ENCODE measurements at regions of chr9 and their contacts with region 1.

Region 1: GRCh38 chr9:128296337-128297220 is 20.5 kb downstream of the SWI5 start:
- DNase-seq: no peak
- ATAC-seq: no peak
- H3K4me3 ChIP-seq: no peak overlapping the region
- H3K27ac ChIP-seq: no peak overlapping the region
- H3K4me1 ChIP-seq: peaks cover 6% of the 10 kb centered on the region
- H3K27me3 ChIP-seq: no peaks in the 10 kb centered on the region
- CTCF ChIP-seq: no peak

Region 2: DNA sequence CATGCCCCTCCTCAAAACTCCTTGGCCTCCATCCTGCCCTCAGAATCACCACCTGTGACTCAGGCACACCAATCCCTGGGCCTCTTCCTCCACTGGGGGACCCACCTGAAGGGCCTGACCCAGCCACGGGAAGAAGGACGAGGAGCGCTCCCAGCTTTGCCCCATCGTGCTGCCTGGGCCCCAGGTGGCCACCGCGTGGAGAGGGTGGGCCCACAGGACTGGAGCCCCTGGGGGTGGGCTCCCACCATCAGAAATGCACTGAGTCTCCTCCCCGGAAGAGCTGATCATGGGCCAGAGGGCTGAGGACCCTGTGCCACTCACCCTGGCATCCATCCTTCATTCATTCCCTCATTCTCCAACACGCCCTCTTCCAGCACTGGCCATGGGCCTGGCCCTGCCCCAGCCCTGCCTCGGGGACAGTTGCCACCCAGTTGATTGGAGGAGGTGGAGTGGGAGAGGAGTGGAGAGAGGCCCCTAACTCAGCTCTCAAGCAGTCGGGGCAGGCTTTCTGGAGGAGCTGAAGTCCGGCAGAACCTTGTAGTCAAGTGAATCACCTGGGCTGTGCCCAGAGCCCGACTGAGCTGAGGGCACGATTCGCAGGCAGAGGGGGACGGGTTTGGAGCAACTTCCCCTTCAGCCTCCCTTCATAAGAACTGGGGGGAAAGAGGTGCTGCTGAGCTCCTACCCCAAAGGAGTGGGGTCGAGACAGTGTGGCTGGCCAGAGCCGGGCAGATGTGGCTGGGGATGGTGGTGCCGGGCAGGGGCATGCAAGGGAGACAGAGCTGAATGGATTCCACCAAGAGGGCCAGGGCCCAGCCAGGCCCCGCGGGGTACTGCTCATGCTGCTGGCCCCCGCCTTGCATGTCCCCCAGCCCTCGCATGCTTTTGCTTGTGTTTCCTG is 63.8 kb before region 1 on chr9:
- intact Hi-C with region 1: no loop called
- DNase-seq: no peak
- ATAC-seq: peak; percentile 13
- H3K4me3 ChIP-seq: no peak overlapping the region
- H3K27ac ChIP-seq: no peak overlapping the region
- H3K4me1 ChIP-seq: no peaks in the 10 kb centered on the region
- H3K27me3 ChIP-seq: no peaks in the 10 kb centered on the region
- CTCF ChIP-seq: no peak

Region 3: GRCh38 chr9:128339771-128340690 is 43.5 kb after region 1 on chr9 and contains the start of gene SLC27A4:
- intact Hi-C with region 1: loop called (anchors 10 kb)
- DNase-seq: peak; percentile 93
- ATAC-seq: peak; percentile 95
- H3K4me3 ChIP-seq: peak within 1 kb of the TSS; percentile 91
- H3K27ac ChIP-seq: peak within 1 kb of the TSS; percentile 76
- H3K4me1 ChIP-seq: peaks cover 4% of the 10 kb centered on the region
- H3K27me3 ChIP-seq: no peaks in the 10 kb centered on the region
- CTCF ChIP-seq: no peak
- total RNA-seq, gene SLC27A4: 21.4 TPM

Measured in upper lobe of right lung (tissue), 1 donor.